HEK293 (cell line): ENCODE measurements at regions of chr3 and their contacts with region 1.

Region 1: GRCh38 chr3:107235928-107236315 is 141.3 kb upstream of the CCDC54 start:
- H3K4me3 ChIP-seq: no peak overlapping the region; the same call in 1 of the 2 replicates
- H3K27ac ChIP-seq: no peak overlapping the region
- H3K4me1 ChIP-seq: no peaks in the 10 kb centered on the region; the same call in 1 of the 2 replicates
- CTCF ChIP-seq: peak; percentile 55

Region 2: GRCh38 chr3:107172411-107172810 is 63.5 kb before region 1 on chr3:
- CTCF ChIA-PET with region 1: no interaction called
- POLR2A ChIA-PET with region 1: no interaction called
- H3K4me3 ChIP-seq: no peak overlapping the region
- H3K27ac ChIP-seq: no peak overlapping the region
- H3K4me1 ChIP-seq: no peaks in the 10 kb centered on the region
- CTCF ChIP-seq: no peak

Region 3: GRCh38 chr3:107224026-107224596 is 11.8 kb before region 1 on chr3:
- CTCF ChIA-PET with region 1: interaction called, 10 read pairs
- POLR2A ChIA-PET with region 1: no interaction called
- H3K4me3 ChIP-seq: no peak overlapping the region
- H3K27ac ChIP-seq: no peak overlapping the region
- H3K4me1 ChIP-seq: no peaks in the 10 kb centered on the region
- CTCF ChIP-seq: no peak

Region 4: GRCh38 chr3:107421170-107421792 is 185.4 kb after region 1 on chr3:
- CTCF ChIA-PET with region 1: interaction called, 15 read pairs
- POLR2A ChIA-PET with region 1: no interaction called
- H3K4me3 ChIP-seq: no peak overlapping the region; the same call in none of the 2 replicates
- H3K27ac ChIP-seq: no peak overlapping the region
- H3K4me1 ChIP-seq: no peaks in the 10 kb centered on the region
- CTCF ChIP-seq: no peak

Region 5: GRCh38 chr3:107429320-107430181 is 193.6 kb after region 1 on chr3:
- CTCF ChIA-PET with region 1: interaction called, 15 read pairs
- POLR2A ChIA-PET with region 1: no interaction called
- H3K4me3 ChIP-seq: peak overlapping the region; percentile 44
- H3K27ac ChIP-seq: peak overlapping the region; percentile 60; the same call in 1 of the 2 replicates
- H3K4me1 ChIP-seq: peaks cover 5% of the 10 kb centered on the region; the same call in 1 of the 2 replicates
- CTCF ChIP-seq: peak; percentile 61